Esophagus squamous epithelium (tissue), 5 donors: ENCODE measurements at regions of chr20 and their contacts with region 1.

Region 1: GRCh38 chr20:38060536-38060935 is 27.0 kb downstream of the RPRD1B start:
- DNase-seq: no peak
- H3K4me3 ChIP-seq: no peak overlapping the region
- H3K27ac ChIP-seq: peak overlapping the region in 1 of 4 donors; percentile 23
- H3K4me1 ChIP-seq: peaks cover 0 to 29% (median 0%) of the 10 kb centered on the region in 3 donors
- H3K27me3 ChIP-seq: no peaks in the 10 kb centered on the region
- CTCF ChIP-seq: no peak
- POLR2A ChIP-seq: no peak

Region 2: DNA sequence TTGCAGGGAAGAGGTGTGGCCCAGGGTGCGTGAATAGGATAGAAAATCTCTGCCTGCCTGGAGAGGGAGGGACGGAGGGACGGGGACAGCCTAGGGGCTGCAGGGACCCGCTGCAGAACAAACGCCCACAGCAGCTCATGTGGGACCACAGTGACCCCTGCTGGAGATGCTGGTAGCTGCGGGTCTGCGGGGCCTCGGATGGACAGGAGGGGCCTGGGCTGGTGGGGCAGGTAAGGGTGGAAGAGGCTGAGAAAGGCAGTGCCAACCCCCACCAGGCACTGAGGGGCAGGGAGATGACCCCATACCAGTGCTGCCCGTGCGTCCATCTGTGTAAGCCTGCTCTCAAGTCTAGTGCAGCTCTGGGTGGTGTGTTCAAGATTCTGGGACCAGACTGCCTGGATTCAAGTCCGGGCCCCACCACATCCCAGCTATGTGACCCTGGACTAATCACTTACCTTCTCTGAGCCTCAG is 160.6 kb after region 1 on chr20:
- intact Hi-C with region 1: loop called (anchors 5 kb)
- DNase-seq: no peak
- H3K4me3 ChIP-seq: no peak overlapping the region
- H3K27ac ChIP-seq: no peak overlapping the region
- H3K4me1 ChIP-seq: peaks cover 2 to 22% (median 3%) of the 10 kb centered on the region in 3 donors
- H3K27me3 ChIP-seq: no peaks in the 10 kb centered on the region
- CTCF ChIP-seq: peak; percentile 70 to 88 (median 82)
- POLR2A ChIP-seq: no peak